ENCODE measurements at regions of chr15 and their contacts with region 1.

Region 1: DNA sequence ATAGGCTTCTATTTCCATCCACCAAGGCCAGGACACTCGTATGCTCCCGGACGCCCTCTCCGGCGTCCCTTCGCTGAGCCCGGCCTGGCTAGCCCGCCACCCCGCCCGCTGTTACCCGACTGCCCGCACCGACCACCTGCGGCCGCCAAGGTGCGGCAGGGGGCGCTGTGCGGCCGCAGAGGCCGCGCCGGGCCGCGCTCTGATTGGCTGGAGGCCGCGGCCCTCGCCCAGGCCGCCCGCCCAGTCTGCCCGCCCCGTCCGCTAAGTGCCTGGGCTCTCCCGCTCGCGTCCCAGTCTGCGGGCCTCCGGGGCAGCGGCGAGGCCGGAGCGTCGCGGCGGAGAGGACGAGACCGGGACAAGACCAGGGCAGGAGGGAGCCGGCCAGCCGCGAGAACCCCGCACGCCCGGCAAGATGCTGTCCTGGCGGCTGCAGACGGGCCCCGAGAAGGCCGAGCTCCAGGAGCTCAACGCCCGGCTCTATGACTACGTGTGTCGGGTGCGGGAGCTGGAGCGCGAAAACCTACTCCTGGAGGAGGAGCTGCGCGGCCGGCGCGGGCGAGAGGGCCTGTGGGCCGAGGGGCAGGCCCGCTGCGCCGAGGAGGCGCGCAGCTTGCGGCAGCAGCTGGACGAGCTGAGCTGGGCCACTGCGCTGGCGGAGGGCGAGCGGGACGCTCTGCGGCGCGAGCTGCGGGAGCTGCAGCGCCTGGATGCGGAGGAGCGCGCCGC is at the start of gene SYNM:
- DNase-seq: peak; percentile 43
- ATAC-seq: peak; percentile 70
- H3K4me3 Mint-ChIP-seq: peak within 1 kb of the TSS; percentile 53
- H3K27ac Mint-ChIP-seq: no peak within 1 kb of the TSS
- H3K4me1 Mint-ChIP-seq: peaks cover 17% of the 10 kb centered on the region
- H3K27me3 Mint-ChIP-seq: peaks cover 38% of the 10 kb centered on the region
- CTCF ChIP-seq: peak; percentile 74
- total RNA-seq, gene SYNM: 0.63 to 0.69 TPM

Region 2: DNA sequence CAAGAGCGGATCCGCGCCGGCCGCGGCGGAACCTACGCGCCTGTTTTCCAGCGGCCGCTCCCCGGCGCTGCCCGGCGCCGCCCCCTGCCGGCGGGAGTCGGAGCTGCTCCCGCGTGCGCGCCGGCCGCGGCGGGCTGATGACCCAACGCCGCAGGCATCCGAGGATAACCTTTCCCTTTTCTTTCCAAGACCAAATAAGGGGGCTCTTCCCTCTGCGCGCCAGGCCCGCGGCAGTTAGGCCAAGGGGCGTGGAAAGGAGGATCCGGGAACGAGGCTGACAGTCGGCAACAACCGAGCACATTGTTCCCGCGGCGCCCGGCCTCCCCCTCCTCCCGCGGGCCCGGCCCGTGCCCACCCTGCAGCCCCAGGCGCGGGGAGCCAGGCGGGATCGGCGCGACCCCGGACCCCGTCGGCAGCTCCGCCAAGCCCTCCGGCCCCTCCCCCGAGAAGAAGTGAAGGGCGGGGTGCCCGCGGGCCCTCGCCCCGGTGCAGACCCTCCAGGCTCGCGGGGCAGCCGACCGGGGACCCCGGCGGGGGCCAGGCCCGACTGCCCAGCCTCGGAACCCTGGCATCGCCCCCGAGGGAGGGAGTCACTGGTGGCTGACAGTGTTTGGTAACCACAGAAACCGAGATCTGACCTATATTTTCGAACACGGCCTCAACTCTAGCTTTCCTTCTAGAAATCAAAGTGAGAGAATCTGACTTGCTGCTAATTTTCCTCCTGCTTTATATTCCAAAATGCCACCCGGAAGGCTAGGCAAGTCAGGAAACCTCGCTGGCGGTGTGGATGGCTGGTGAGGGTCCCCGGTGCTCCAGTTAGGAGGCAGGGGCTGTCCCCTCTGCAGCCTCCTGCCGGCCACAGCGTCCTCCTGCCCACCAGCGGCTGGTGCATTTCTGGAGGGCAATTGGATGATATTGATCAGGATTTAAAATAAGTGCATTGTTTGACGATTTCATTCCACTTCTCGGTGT is 45.7 kb before region 1 on chr15:
- CTCF ChIA-PET with region 1: interaction called, 15 read pairs
- POLR2A ChIA-PET with region 1: no interaction called
- intact Hi-C with region 1: no loop called
- DNase-seq: peak; percentile 39
- ATAC-seq: peak; percentile 89
- H3K4me3 Mint-ChIP-seq: peak overlapping the region; percentile 58
- H3K27ac Mint-ChIP-seq: no peak overlapping the region
- H3K4me1 Mint-ChIP-seq: peaks cover 8% of the 10 kb centered on the region
- H3K27me3 Mint-ChIP-seq: peaks cover 30% of the 10 kb centered on the region
- CTCF ChIP-seq: peak; percentile 76

Region 3: DNA sequence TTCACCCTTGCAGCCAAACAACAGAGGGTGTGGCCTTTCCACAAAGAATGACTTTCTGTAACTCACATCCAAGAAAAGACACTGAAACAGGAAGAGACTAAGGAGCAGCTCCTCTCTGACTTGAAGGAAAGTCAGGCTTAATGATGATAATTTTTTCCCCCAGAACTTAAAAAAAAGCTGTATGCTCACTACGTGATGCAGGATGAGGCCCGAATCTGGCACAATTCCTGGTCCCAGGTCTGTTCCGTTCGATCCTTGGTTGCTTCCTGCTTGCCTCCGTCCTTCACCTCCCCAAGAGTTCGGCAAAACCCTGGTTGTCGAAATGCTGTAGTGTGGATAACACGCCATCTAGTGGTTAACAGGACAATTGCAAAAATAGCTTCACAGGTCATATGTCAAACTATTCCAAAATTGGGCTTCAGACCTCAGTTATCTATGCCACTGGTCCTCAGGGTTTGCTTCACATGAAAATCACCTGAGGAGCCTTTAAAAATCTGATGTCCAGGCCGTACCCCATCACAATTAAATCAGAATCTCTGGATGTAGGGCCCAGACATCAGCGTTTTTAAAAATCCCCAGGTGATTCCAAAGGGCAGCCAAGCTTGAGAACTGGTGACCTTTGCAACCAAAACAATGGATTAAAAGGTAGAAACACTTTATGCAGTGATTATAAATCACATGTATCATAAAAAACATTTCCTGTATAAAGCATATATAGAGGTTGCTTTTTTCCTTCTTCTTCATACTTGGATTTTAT is 28.2 kb before region 1 on chr15:
- CTCF ChIA-PET with region 1: interaction called, 19 read pairs
- POLR2A ChIA-PET with region 1: interaction called, 3 read pairs
- intact Hi-C with region 1: no loop called
- DNase-seq: peak; percentile 47
- ATAC-seq: peak; percentile 80
- H3K4me3 Mint-ChIP-seq: peak overlapping the region; percentile 69
- H3K27ac Mint-ChIP-seq: no peak overlapping the region
- H3K4me1 Mint-ChIP-seq: peaks cover 5% of the 10 kb centered on the region
- H3K27me3 Mint-ChIP-seq: no peaks in the 10 kb centered on the region
- CTCF ChIP-seq: peak; percentile 74

Region 4: GRCh38 chr15:99090011-99090699 is 14.8 kb before region 1 on chr15:
- CTCF ChIA-PET with region 1: interaction called, 13 read pairs
- POLR2A ChIA-PET with region 1: no interaction called
- intact Hi-C with region 1: no loop called
- DNase-seq: no peak
- ATAC-seq: peak; percentile 42
- H3K4me3 Mint-ChIP-seq: no peak overlapping the region
- H3K27ac Mint-ChIP-seq: peak overlapping the region; percentile 26
- H3K4me1 Mint-ChIP-seq: peaks cover 6% of the 10 kb centered on the region
- H3K27me3 Mint-ChIP-seq: no peaks in the 10 kb centered on the region
- CTCF ChIP-seq: no peak

Region 5: DNA sequence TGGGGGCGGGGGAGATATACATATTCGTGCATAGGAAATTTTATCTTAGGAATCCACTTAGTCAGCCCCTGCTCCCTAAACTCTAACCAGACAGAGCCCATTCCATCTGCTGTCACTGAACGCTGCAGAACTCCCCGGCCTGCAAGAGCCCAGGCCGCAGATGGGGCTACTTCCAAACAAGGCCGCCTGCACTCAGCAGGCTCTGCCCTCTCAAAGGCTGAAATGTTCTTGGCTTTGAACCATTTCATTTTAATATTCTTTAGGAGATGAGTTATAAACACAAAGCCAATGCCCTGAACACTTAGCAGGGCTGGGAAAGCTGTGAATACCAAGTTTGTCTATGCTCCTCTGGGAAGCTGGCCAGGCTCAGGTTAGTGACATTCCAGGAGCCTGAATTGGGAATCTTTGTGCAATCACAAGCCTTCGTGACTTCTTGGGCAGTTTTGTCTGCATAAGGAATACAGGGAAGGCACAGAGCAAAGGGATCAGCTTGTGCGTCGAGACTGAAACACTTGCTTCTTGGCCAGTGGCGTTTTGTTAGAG is 64.9 kb after region 1 on chr15:
- CTCF ChIA-PET with region 1: no interaction called
- POLR2A ChIA-PET with region 1: no interaction called
- intact Hi-C with region 1: no loop called
- DNase-seq: no peak
- ATAC-seq: no peak
- H3K4me3 Mint-ChIP-seq: no peak overlapping the region
- H3K27ac Mint-ChIP-seq: no peak overlapping the region
- H3K4me1 Mint-ChIP-seq: no peaks in the 10 kb centered on the region
- H3K27me3 Mint-ChIP-seq: no peaks in the 10 kb centered on the region
- CTCF ChIP-seq: no peak

Region 6: DNA sequence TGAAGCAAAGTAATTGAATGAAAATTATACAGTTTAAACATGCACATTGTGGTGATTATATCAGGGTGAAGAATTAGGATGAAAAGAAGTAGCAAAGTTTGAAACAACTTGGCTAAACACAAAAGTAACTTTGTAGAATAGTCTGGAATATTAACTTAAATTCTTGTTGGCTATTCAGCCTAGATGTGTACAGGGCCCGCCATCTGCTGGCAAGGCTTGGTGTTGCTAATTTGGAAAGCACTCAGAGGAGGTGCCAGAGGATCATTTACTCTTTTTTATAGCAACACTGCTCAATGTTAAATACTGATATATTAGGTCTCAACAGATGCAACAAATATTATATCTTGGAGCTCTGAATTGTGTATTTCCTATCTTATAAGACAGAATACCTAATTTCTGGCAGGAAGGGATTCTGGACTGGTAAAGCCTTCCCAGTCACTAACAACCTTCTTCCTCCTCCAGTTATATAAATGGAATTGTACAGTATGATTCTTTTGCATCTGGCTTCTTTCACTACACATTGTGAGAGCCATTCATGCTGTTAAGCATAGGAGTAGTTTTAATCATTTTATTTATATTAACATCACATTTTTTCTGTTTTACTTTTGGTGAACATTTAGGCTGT is 108.3 kb after region 1 on chr15:
- CTCF ChIA-PET with region 1: interaction called, 13 read pairs
- POLR2A ChIA-PET with region 1: no interaction called
- intact Hi-C with region 1: loop called (anchors 2 kb)
- DNase-seq: peak; percentile 85
- ATAC-seq: peak; percentile 74
- H3K4me3 Mint-ChIP-seq: no peak overlapping the region
- H3K27ac Mint-ChIP-seq: no peak overlapping the region
- H3K4me1 Mint-ChIP-seq: no peaks in the 10 kb centered on the region
- H3K27me3 Mint-ChIP-seq: peaks cover 3% of the 10 kb centered on the region
- CTCF ChIP-seq: peak; percentile 92

Measured in activated CD8-positive, alpha-beta T cell treated with anti-CD3 and anti-CD28 coated beads for 36 hours (primary cell).